ENCODE measurements at regions of chr1 and their contacts with region 1.

Region 1: GRCh38 chr1:27603681-27604578 is at the start of gene AHDC1:
- DNase-seq: peak; percentile 85 to 93 (median 90)
- ATAC-seq: peak; percentile 89
- H3K4me3 ChIP-seq: peak within 1 kb of the TSS; percentile 81
- H3K4me3 Mint-ChIP-seq: peak within 1 kb of the TSS; percentile 83 to 98 (median 91)
- H3K27ac ChIP-seq: peak within 1 kb of the TSS; percentile 84
- H3K27ac Mint-ChIP-seq: peak within 1 kb of the TSS; percentile 66 to 98 (median 90)
- H3K4me1 ChIP-seq: peaks cover 11 to 37% of the 10 kb centered on the region in 2 donors
- H3K4me1 Mint-ChIP-seq: peaks cover 40 to 49% (median 42%) of the 10 kb centered on the region in 7 donors
- H3K27me3 ChIP-seq: no peaks in the 10 kb centered on the region
- H3K27me3 Mint-ChIP-seq: no peaks in the 10 kb centered on the region
- total RNA-seq, gene AHDC1: 18.4 to 38.8 (median 21.3) TPM

Region 2: GRCh38 chr1:27102707-27103491 is 501.0 kb before region 1 on chr1:
- CTCF ChIA-PET with region 1: no interaction called
- POLR2A ChIA-PET with region 1: no interaction called
- intact Hi-C with region 1: loop called in 1 of 2 experiments (anchors 5 kb)
- DNase-seq: peak; percentile 54 to 87 (median 76)
- ATAC-seq: peak; percentile 75
- H3K4me3 ChIP-seq: no peak overlapping the region
- H3K4me3 Mint-ChIP-seq: no peak overlapping the region
- H3K27ac ChIP-seq: no peak overlapping the region
- H3K27ac Mint-ChIP-seq: peak overlapping the region in 2 of 9 donors; percentile 45 to 57
- H3K4me1 ChIP-seq: no peaks in the 10 kb centered on the region
- H3K4me1 Mint-ChIP-seq: peaks cover 0 to 21% (median 3%) of the 10 kb centered on the region in 7 donors
- H3K27me3 ChIP-seq: no peaks in the 10 kb centered on the region
- H3K27me3 Mint-ChIP-seq: no peaks in the 10 kb centered on the region

Region 3: DNA sequence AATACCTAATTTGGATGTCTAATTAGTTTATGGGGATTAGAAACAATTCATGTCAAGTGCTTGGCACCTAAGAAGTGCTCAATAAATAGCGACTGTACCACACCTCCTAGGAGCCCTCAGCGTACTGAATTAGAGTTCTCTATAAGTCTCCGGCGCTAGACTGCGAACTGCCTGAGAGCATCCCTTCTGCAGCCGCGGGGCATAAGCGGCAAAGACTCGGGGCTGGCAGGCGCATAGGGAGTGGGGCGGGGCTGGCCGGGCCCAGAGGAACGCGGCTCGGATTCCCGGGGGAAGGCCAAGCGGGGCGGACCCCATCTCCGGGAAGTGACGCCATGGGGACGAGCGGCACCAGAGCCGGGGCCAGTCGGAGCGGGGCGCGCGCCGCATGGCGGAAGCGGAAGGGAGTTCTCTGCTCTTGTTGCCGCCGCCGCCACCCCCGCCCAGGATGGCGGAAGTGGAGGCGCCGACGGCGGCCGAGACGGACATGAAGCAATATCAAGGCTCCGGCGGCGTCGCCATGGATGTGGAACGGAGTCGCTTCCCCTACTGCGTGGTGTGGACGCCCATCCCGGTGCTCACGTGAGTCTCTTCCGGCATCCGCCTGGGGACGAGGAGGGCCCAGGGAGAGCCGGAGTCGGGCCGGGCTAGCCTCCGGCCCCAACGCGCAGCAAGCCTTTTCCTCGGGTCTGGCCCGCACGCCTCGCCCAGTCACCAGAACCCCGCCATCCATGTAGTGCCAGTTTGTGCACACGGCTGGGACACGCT is 281.9 kb before region 1 on chr1 and contains the start of gene TMEM222:
- CTCF ChIA-PET with region 1: no interaction called
- POLR2A ChIA-PET with region 1: no interaction called
- intact Hi-C with region 1: loop called (anchors 1 to 10 kb)
- DNase-seq: peak; percentile 94 to 99 (median 97)
- ATAC-seq: peak; percentile 98
- H3K4me3 ChIP-seq: peak within 1 kb of the TSS; percentile 91
- H3K4me3 Mint-ChIP-seq: peak within 1 kb of the TSS; percentile 91 to 99 (median 96)
- H3K27ac ChIP-seq: peak within 1 kb of the TSS; percentile 95
- H3K27ac Mint-ChIP-seq: peak within 1 kb of the TSS; percentile 88 to 97 (median 93)
- H3K4me1 ChIP-seq: peaks cover 18 to 22% of the 10 kb centered on the region in 2 donors
- H3K4me1 Mint-ChIP-seq: peaks cover 22 to 59% (median 54%) of the 10 kb centered on the region in 7 donors
- H3K27me3 ChIP-seq: no peaks in the 10 kb centered on the region
- H3K27me3 Mint-ChIP-seq: peaks cover 0 to 5% (median 3%) of the 10 kb centered on the region in 5 donors
- total RNA-seq, gene TMEM222: 23.7 to 44.0 (median 41.9) TPM

Region 4: GRCh38 chr1:27402349-27402754 is 201.6 kb before region 1 on chr1:
- CTCF ChIA-PET with region 1: interaction called, 23 read pairs
- POLR2A ChIA-PET with region 1: interaction called, 6 read pairs
- intact Hi-C with region 1: loop called (anchors 1 kb)
- DNase-seq: no peak
- ATAC-seq: peak; percentile 44
- H3K4me3 ChIP-seq: no peak overlapping the region
- H3K4me3 Mint-ChIP-seq: no peak overlapping the region
- H3K27ac ChIP-seq: peak overlapping the region; percentile 48
- H3K27ac Mint-ChIP-seq: peak overlapping the region in 7 of 9 donors; percentile 36 to 95 (median 87)
- H3K4me1 ChIP-seq: peaks cover 0 to 17% of the 10 kb centered on the region in 2 donors
- H3K4me1 Mint-ChIP-seq: peaks cover 10 to 40% (median 33%) of the 10 kb centered on the region in 7 donors
- H3K27me3 ChIP-seq: no peaks in the 10 kb centered on the region
- H3K27me3 Mint-ChIP-seq: no peaks in the 10 kb centered on the region

Region 5: GRCh38 chr1:27525296-27526272 is 78.3 kb before region 1 on chr1:
- CTCF ChIA-PET with region 1: interaction called, 14 read pairs
- POLR2A ChIA-PET with region 1: interaction called, 59 read pairs
- intact Hi-C with region 1: loop called (anchors 1 kb)
- DNase-seq: peak in 8 of 9 donors; percentile 41 to 67 (median 52)
- ATAC-seq: peak; percentile 36
- H3K4me3 ChIP-seq: peak overlapping the region; percentile 53
- H3K4me3 Mint-ChIP-seq: peak overlapping the region; percentile 72 to 98 (median 93)
- H3K27ac ChIP-seq: peak overlapping the region; percentile 93
- H3K27ac Mint-ChIP-seq: peak overlapping the region; percentile 80 to 99 (median 98)
- H3K4me1 ChIP-seq: peaks cover 62% of the 10 kb centered on the region in 2 donors
- H3K4me1 Mint-ChIP-seq: peaks cover 63 to 82% (median 74%) of the 10 kb centered on the region in 7 donors
- H3K27me3 ChIP-seq: no peaks in the 10 kb centered on the region
- H3K27me3 Mint-ChIP-seq: no peaks in the 10 kb centered on the region

Region 6: GRCh38 chr1:27643701-27644625 is 40.0 kb after region 1 on chr1:
- CTCF ChIA-PET with region 1: interaction called, 15 read pairs
- POLR2A ChIA-PET with region 1: interaction called, 5 read pairs
- intact Hi-C with region 1: loop called in 1 of 2 experiments (anchors 1 kb)
- DNase-seq: peak in 8 of 9 donors; percentile 54 to 79 (median 67)
- ATAC-seq: peak; percentile 98
- H3K4me3 ChIP-seq: no peak overlapping the region
- H3K4me3 Mint-ChIP-seq: peak overlapping the region in 4 of 10 donors; percentile 7 to 34 (median 28)
- H3K27ac ChIP-seq: no peak overlapping the region
- H3K27ac Mint-ChIP-seq: peak overlapping the region; percentile 38 to 85 (median 64)
- H3K4me1 ChIP-seq: peaks cover 11 to 12% of the 10 kb centered on the region in 2 donors
- H3K4me1 Mint-ChIP-seq: peaks cover 4 to 38% (median 23%) of the 10 kb centered on the region in 7 donors
- H3K27me3 ChIP-seq: no peaks in the 10 kb centered on the region
- H3K27me3 Mint-ChIP-seq: no peaks in the 10 kb centered on the region

Region 7: GRCh38 chr1:27725374-27726173 is 121.6 kb after region 1 on chr1 and contains the start of gene FAM76A:
- CTCF ChIA-PET with region 1: interaction called, 4 read pairs
- POLR2A ChIA-PET with region 1: no interaction called
- intact Hi-C with region 1: loop called in 1 of 2 experiments (anchors 1 kb)
- DNase-seq: peak; percentile 97 to 100 (median 99)
- ATAC-seq: peak; percentile 97
- H3K4me3 ChIP-seq: peak within 1 kb of the TSS; percentile 77
- H3K4me3 Mint-ChIP-seq: peak within 1 kb of the TSS; percentile 86 to 93 (median 90)
- H3K27ac ChIP-seq: peak within 1 kb of the TSS; percentile 91
- H3K27ac Mint-ChIP-seq: peak within 1 kb of the TSS; percentile 93 to 100 (median 98)
- H3K4me1 ChIP-seq: peaks cover 7 to 17% of the 10 kb centered on the region in 2 donors
- H3K4me1 Mint-ChIP-seq: peaks cover 9 to 35% (median 28%) of the 10 kb centered on the region in 7 donors
- H3K27me3 ChIP-seq: no peaks in the 10 kb centered on the region
- H3K27me3 Mint-ChIP-seq: no peaks in the 10 kb centered on the region
- total RNA-seq, gene FAM76A: 15.2 to 25.2 (median 22.2) TPM